ENCODE measurements at regions of chr22 and their contacts with region 1.

Region 1: DNA sequence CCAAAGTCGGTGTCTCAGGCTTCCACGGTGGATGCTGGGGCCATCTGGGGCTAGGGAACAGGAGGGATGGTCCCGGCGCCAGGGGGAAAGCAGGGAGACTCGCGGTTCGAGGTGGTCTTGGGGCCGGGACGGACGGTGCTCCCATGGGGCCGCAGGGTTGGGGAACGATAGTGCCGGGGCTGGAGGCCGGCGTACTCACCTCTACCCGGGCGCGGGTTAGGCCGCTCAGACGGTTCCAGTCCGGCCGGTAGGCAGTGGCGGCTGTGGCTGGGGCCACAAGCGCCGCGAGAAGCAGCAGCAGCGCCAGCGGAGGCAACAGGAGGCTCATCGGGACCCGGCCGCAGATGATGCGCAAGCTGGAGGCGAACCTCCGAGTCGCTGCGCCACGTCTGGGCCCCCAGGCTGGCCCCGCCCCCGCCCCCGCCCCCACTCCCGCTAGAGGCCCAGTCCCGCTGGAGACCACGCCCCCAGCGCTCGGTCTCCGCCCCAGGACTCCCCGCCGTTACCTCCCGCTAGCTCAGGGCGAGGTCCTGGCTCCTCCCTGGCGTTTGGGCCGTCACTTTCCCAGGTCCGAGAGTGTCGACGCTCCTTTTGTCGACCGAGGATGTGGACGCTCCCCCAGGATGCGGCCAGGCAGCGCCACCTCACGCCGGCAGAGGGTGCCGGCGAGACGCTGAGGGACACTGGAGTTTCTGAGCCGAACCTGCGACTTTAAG is at the start of gene SELENOM:
- DNase-seq: peak; percentile 98
- H3K4me3 ChIP-seq: peak within 1 kb of the TSS; percentile 66 to 77 (median 67)
- H3K27ac ChIP-seq: peak within 1 kb of the TSS; percentile 82
- H3K4me1 ChIP-seq: peaks cover 7% of the 10 kb centered on the region
- H3K27me3 ChIP-seq: no peaks in the 10 kb centered on the region
- CTCF ChIP-seq: peak; percentile 74 to 97
- total RNA-seq, gene SELENOM: 24.6 to 38.7 TPM

Region 2: GRCh38 chr22:31148953-31149627 is 41.8 kb after region 1 on chr22:
- CTCF ChIA-PET with region 1: interaction called, 4 read pairs
- dilution Hi-C with region 1: no loop called
- in situ Hi-C with region 1: loop called in 1 of 2 experiments (anchors 5 kb)
- intact Hi-C with region 1: loop called (anchors 1 kb)
- DNase-seq: peak; percentile 48
- H3K4me3 ChIP-seq: no peak overlapping the region
- H3K27ac ChIP-seq: no peak overlapping the region
- H3K4me1 ChIP-seq: no peaks in the 10 kb centered on the region
- H3K27me3 ChIP-seq: no peaks in the 10 kb centered on the region
- CTCF ChIP-seq: peak; percentile 98 to 99

Region 3: DNA sequence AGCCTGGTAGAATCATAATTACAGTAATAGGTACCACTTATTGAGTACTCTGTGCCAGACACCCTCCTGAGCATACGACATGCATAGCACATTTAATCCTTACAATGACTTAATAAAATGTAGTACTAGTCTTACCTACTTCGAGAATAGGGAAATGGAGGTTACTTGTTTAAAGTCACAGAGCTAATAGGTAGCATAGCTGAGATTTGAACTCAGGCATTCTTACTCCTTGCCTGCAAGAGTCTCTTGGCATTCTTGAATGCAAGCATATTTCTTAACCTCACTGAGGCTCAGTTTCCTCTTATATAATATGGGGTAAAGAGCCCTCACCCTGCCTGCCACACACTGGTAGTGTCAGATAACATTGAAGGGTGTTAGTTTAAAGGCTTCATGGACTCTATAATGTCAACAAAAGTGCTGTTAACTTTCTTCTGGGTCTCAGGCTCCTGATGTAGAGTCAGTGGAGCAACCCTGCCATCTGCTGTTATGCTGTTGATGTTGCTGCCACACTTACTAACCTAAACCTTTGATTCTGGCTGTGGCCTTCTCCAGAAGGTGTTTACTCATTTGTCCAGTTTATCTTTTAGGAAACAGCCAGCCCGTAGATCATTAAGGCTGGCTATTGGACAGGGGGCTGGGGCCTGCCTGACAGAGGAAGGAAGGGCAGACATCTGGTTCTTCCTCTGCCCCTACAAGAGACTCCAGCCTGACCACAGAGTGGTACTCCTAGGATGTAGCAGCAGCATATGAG is 123.7 kb after region 1 on chr22:
- CTCF ChIA-PET with region 1: no interaction called
- dilution Hi-C with region 1: no loop called
- in situ Hi-C with region 1: no loop called
- intact Hi-C with region 1: loop called (anchors 1 kb)
- DNase-seq: peak; percentile 16
- H3K4me3 ChIP-seq: no peak overlapping the region
- H3K27ac ChIP-seq: no peak overlapping the region
- H3K4me1 ChIP-seq: peaks cover 3% of the 10 kb centered on the region
- H3K27me3 ChIP-seq: no peaks in the 10 kb centered on the region
- CTCF ChIP-seq: peak; percentile 43 to 77

Region 4: DNA sequence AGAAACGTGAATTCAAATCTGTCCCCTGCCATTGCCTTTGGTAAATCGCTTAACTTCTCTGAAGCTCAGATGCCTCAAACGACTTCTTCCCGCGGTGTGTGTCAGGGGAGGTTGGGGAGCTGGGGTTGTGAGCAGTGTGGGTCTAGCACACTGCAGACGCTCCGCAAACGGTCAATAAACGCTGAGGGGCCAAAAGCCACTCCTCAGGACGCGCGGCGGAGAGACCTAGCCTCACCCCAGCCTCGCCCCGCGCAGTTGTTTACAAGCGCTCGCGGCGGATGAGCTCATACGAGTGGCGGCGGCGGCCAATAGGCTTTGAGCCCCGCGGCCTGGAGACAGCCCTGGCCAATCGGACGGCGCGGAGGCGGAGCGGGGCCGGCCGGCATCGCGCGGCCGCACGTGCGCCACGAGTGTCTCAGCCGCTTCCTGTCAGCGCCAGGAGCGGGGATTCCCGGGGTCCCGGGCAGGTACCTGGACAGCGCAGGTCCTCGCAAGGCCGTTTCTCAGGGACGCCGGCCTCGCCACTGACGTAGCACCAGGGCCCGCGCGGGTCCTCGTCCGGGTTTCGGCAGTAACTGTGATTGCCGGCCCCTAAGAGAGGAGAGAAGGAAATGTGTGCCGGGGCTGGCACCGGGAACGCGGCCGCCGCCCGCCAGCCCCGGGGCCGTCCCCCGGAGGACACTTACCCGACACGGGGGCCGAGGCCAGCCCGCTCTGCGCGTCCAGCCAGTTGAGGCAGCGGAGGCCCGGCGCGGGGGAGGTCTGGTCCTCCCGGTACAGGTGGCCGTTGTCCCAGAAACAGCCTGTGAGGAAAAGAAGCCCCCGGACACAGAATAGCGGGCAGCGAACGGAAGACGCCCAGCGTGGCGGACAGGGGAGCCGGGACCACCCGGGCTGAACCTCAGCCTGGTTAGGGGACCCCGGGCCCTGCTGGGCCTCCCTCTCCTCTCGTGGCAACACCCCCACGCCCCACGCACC is 183.4 kb after region 1 on chr22:
- CTCF ChIA-PET with region 1: interaction called, 10 read pairs
- dilution Hi-C with region 1: no loop called
- in situ Hi-C with region 1: no loop called
- intact Hi-C with region 1: no loop called
- DNase-seq: peak; percentile 95
- H3K4me3 ChIP-seq: peak overlapping the region; percentile 46 to 52 (median 49)
- H3K27ac ChIP-seq: peak overlapping the region; percentile 72
- H3K4me1 ChIP-seq: peaks cover 30% of the 10 kb centered on the region
- H3K27me3 ChIP-seq: no peaks in the 10 kb centered on the region
- CTCF ChIP-seq: no peak

Region 5: DNA sequence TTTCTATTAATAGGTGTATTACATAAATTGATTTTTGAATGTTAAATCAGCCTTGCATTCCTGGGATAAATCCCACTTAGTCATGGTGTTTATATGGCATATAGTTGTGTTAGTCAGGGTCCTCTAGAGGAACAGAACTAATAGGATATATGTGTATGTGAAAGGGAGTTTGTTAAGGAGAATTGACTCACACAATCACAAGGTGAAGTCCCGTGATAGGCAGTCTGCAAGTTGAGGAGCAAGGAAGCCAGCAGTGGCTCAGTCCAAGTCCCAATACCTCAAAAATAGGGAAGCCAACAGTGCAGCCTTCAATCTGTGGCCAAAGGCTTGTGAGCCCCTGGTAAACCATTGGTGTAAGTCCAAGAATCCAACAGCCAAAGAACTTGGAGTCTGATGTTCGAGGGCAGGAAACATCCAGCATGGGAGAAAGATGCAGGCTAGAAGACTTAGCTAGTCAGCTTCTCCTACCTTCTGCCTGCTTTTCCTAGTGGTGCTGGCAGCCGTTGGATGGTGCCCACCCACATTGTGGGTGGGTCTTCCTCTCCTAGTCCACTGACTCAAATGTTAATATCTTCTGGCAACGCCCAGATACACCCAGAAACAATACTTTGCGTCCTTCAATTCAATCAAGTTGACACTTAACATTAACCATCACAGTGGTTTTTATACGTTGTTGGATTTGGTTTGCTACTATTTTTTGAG is 401.9 kb after region 1 on chr22:
- CTCF ChIA-PET with region 1: no interaction called
- dilution Hi-C with region 1: no loop called
- in situ Hi-C with region 1: no loop called
- intact Hi-C with region 1: no loop called
- DNase-seq: no peak
- H3K4me3 ChIP-seq: no peak overlapping the region
- H3K27ac ChIP-seq: no peak overlapping the region
- H3K4me1 ChIP-seq: no peaks in the 10 kb centered on the region
- H3K27me3 ChIP-seq: no peaks in the 10 kb centered on the region
- CTCF ChIP-seq: no peak